Calu3 (cell line): ENCODE measurements at regions of chr11 and their contacts with region 1.

Region 1: DNA sequence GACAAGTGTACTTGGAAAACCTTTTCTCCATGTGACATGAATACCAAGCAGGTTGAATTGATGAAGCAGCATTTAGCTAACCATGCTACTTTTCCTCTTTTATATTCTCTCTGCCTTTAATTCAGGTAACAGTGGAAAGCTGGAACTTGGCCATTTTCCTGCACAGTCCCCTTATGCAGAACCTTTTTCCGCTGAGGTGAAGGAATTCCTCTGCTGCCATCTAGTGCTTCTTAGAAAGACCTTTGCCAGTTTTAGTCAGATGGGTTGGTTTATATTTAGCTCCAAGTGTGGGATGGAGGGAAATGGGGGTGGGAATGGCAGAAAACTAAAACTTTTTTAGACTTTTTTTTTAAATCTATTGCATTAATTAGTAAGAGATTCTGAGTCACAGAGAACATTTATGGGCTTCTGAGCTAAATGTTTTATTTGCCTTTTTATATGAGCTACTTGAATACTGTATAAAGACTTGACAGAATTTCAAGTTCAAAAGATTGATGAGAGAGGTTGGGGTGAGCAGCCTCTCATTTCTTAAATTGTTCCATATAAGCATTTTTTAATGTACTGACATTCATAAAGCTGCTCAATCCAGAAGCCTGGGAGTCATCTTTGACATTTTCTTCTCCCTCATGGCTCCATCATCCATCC is 153.9 kb upstream of the ZC3H12C start:
- DNase-seq: peak; percentile 21
- H3K4me3 Mint-ChIP-seq: no peak overlapping the region
- H3K27ac Mint-ChIP-seq: no peak overlapping the region
- H3K4me1 Mint-ChIP-seq: peaks cover 9% of the 10 kb centered on the region
- H3K27me3 Mint-ChIP-seq: no peaks in the 10 kb centered on the region
- CTCF ChIP-seq: peak; percentile 47

Region 2: DNA sequence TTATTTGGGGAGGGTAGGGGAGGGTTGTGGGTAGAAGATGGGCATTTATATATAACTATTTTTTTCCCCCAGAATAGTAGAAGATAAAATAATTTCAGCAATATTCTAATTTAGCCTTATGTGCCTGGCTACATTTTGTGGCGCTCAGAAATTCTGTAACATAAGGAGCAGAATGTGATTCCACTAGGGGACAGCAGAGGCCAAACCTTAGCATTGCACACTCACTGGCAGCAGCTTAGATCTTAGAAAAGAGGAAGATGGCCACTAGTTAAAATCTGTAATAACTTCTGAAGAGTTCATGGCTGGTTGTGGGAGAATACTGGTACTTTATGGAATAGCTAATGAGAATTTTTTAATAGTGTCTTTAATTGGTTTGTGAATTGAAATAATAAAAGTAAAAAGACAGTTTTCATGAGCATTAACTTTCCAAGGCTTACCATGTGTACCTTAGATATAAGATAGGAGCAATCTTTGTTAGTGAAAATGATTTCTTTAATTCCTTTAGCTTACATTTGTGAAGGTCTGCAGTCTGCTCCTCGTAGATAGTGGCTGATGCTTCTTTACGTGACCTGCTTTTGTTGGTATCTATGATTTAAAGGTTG is 1241.3 kb before region 1 on chr11:
- CTCF ChIA-PET with region 1: no interaction called
- intact Hi-C with region 1: loop called (anchors 5 kb)
- DNase-seq: peak; percentile 34
- H3K4me3 Mint-ChIP-seq: no peak overlapping the region
- H3K27ac Mint-ChIP-seq: no peak overlapping the region
- H3K4me1 Mint-ChIP-seq: no peaks in the 10 kb centered on the region
- H3K27me3 Mint-ChIP-seq: no peaks in the 10 kb centered on the region
- CTCF ChIP-seq: peak; percentile 38

Region 3: DNA sequence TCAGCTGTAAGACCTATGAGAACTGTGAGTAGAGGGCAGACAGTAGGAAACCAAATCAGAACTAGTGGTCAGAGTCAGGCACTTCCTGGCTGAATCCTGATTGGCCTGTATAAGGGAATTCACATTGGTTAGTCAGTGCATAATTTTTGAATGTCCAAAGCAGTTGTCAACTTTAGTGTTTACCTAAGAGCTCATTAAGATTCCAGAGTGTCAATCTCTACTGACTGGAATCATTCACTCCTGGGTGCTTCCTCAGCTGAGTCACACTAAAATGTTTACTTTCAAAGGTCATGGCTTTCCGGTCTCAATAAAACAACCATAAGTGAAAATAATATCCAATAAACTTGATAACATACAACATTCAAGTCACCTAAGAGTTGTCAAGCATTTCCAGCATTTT is 211.2 kb before region 1 on chr11:
- CTCF ChIA-PET with region 1: interaction called, 3 read pairs
- intact Hi-C with region 1: loop called (anchors 2 kb)
- DNase-seq: peak; percentile 7
- H3K4me3 Mint-ChIP-seq: no peak overlapping the region
- H3K27ac Mint-ChIP-seq: no peak overlapping the region
- H3K4me1 Mint-ChIP-seq: peaks cover 27% of the 10 kb centered on the region
- H3K27me3 Mint-ChIP-seq: no peaks in the 10 kb centered on the region
- CTCF ChIP-seq: no peak

Region 4: DNA sequence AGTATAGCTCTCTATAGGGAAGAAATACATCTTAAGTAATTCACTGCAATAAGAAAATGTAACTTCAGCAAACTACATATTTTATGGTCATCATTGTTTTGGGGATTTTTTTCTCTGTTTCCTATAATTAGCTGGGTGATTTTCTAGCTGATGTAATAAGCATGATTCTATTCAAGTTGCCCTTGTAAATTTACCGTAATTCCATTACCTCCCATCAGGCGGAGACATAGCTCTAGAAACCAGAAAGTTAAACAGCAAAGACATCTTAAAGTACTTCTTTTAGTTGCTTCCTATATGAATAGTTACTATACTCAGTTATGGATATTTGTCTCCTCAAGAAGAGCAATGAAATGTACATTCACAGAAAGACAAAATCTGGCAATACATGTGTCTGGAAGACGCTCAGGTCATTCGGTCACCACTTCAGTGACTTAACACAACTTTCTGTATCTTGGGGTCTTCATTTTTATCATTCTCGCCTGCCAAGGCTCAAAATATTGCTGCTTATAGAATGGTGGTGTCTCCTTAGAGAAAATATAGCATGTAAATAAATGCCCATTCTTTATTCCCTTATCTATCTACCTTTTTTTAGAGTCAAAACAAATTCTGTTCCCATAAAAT is 86.0 kb before region 1 on chr11:
- CTCF ChIA-PET with region 1: interaction called, 22 read pairs
- intact Hi-C with region 1: loop called (anchors 1 kb)
- DNase-seq: peak; percentile 34
- H3K4me3 Mint-ChIP-seq: no peak overlapping the region
- H3K27ac Mint-ChIP-seq: no peak overlapping the region
- H3K4me1 Mint-ChIP-seq: peaks cover 6% of the 10 kb centered on the region
- H3K27me3 Mint-ChIP-seq: no peaks in the 10 kb centered on the region
- CTCF ChIP-seq: peak; percentile 23